Posterior cingulate gyrus (tissue), 11 donors: ENCODE measurements at regions of chr3 and their contacts with region 1.

Region 1: GRCh38 chr3:136752422-136753325 is 496 bp upstream of the STAG1 start:
- DNase-seq: peak; percentile 97 to 100 (median 98)

Region 2: DNA sequence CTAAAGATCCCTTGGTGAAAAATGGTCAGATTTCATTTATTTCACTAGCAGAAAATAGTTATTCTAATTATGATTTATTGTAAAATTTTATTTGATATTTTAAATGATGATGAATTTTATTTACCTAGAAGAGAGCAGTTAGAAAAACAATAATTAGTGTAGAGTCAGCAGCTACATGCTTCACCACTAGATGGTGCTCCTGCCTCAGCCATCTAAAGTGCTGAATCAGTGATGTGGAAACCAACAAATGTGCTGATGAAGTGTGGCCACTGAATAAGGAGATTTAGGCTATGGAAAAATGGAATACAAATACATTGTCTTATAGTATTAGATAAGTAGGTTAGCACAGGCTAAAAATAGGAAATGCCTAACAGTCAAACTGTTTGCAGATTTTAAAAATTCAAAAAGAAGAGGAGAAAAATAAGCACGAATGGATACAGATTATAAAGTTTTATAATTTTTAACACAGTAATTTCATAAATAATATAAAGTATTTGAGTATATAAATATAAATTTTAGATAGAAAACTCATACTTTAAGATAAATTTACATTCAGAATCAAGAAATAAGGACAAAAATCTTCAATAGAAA is 677.4 kb before region 1 on chr3:
- intact Hi-C with region 1: loop called (anchors 1 kb)
- DNase-seq: peak in 8 of 10 donors; percentile 25 to 93 (median 74)

Region 3: GRCh38 chr3:136250226-136250902 is 502.3 kb before region 1 on chr3 and contains the start of gene PCCB:
- intact Hi-C with region 1: loop called (anchors 5 kb)
- DNase-seq: peak; percentile 83 to 99 (median 90)

Region 4: GRCh38 chr3:136818769-136819391 is 66.2 kb after region 1 on chr3 and contains the start of gene SLC35G2:
- intact Hi-C with region 1: loop called (anchors 2 kb)
- DNase-seq: peak; percentile 38 to 95 (median 66)

Region 5: GRCh38 chr3:137013955-137014688 is 261.4 kb after region 1 on chr3:
- intact Hi-C with region 1: loop called (anchors 1 kb)
- DNase-seq: peak; percentile 81 to 99 (median 96)